Naive thymus-derived CD4-positive, alpha-beta T cell (primary cell): ENCODE measurements at regions of chr4 and their contacts with region 1.

Region 1: GRCh38 chr4:121227341-121227792 is 63.2 kb upstream of the TNIP3 start:
- DNase-seq: peak in 3 of 9 donors; percentile 26 to 40 (median 28)
- ATAC-seq: peak; percentile 76
- H3K4me3 ChIP-seq: peak overlapping the region; percentile 34
- H3K4me3 Mint-ChIP-seq: peak overlapping the region in 9 of 10 donors; percentile 52 to 83 (median 69)
- H3K27ac ChIP-seq: peak overlapping the region; percentile 62
- H3K27ac Mint-ChIP-seq: peak overlapping the region; percentile 9 to 91 (median 77)
- H3K4me1 ChIP-seq: peaks cover 7 to 11% of the 10 kb centered on the region in 2 donors
- H3K4me1 Mint-ChIP-seq: peaks cover 12 to 50% (median 30%) of the 10 kb centered on the region in 7 donors
- H3K27me3 ChIP-seq: no peaks in the 10 kb centered on the region
- H3K27me3 Mint-ChIP-seq: no peaks in the 10 kb centered on the region

Region 2: GRCh38 chr4:121199742-121200561 is 27.4 kb before region 1 on chr4:
- CTCF ChIA-PET with region 1: interaction called, 7 read pairs
- POLR2A ChIA-PET with region 1: interaction called, 5 read pairs
- intact Hi-C with region 1: loop called in 1 of 2 experiments (anchors 2 kb)
- DNase-seq: peak in 1 of 9 donors; percentile 23
- ATAC-seq: peak; percentile 87
- H3K4me3 ChIP-seq: peak overlapping the region; percentile 18
- H3K4me3 Mint-ChIP-seq: peak overlapping the region in 8 of 10 donors; percentile 1 to 59 (median 26)
- H3K27ac ChIP-seq: no peak overlapping the region
- H3K27ac Mint-ChIP-seq: peak overlapping the region in 7 of 9 donors; percentile 5 to 85 (median 23)
- H3K4me1 ChIP-seq: peaks cover 7 to 26% of the 10 kb centered on the region in 2 donors
- H3K4me1 Mint-ChIP-seq: peaks cover 12 to 31% (median 26%) of the 10 kb centered on the region in 7 donors
- H3K27me3 ChIP-seq: no peaks in the 10 kb centered on the region
- H3K27me3 Mint-ChIP-seq: peaks cover 0 to 6% (median 0%) of the 10 kb centered on the region in 5 donors

Region 3: DNA sequence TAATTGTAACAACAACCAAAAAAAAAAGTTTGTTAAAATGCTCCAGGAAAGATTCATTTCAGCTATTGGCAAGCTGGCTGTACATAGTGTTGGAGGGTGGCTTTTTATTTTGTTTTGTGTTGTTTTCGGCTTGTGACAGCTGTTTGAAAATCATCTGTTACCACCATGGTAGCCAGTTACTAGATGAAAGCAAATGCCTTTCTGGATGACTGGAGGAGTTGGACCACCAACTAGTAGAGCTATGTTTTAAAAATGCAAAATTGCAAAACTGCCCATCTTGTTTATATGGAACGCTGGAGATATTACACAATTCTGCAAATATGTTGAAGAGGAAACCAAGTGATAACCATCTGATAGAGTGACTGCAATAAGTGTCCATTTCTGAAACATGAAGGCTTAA is 10.0 kb before region 1 on chr4:
- CTCF ChIA-PET with region 1: interaction called, 5 read pairs
- POLR2A ChIA-PET with region 1: interaction called, 3 read pairs
- intact Hi-C with region 1: loop called in 1 of 2 experiments (anchors 1 kb)
- DNase-seq: no peak
- ATAC-seq: no peak
- H3K4me3 ChIP-seq: no peak overlapping the region
- H3K4me3 Mint-ChIP-seq: no peak overlapping the region
- H3K27ac ChIP-seq: no peak overlapping the region
- H3K27ac Mint-ChIP-seq: peak overlapping the region in 2 of 9 donors; percentile 41 to 69
- H3K4me1 ChIP-seq: peaks cover 12 to 42% of the 10 kb centered on the region in 2 donors
- H3K4me1 Mint-ChIP-seq: peaks cover 23 to 54% (median 37%) of the 10 kb centered on the region in 7 donors
- H3K27me3 ChIP-seq: no peaks in the 10 kb centered on the region
- H3K27me3 Mint-ChIP-seq: peaks cover 0 to 6% (median 0%) of the 10 kb centered on the region in 5 donors

Region 4: GRCh38 chr4:121243485-121243884 is 16.1 kb after region 1 on chr4:
- CTCF ChIA-PET with region 1: interaction called, 4 read pairs
- POLR2A ChIA-PET with region 1: interaction called, 3 read pairs
- intact Hi-C with region 1: loop called in 1 of 2 experiments (anchors 1 kb)
- DNase-seq: no peak
- ATAC-seq: peak; percentile 37
- H3K4me3 ChIP-seq: peak overlapping the region; percentile 50
- H3K4me3 Mint-ChIP-seq: peak overlapping the region; percentile 52 to 85 (median 78)
- H3K27ac ChIP-seq: peak overlapping the region; percentile 43
- H3K27ac Mint-ChIP-seq: peak overlapping the region in 8 of 9 donors; percentile 22 to 87 (median 52)
- H3K4me1 ChIP-seq: peaks cover 0 to 10% of the 10 kb centered on the region in 2 donors
- H3K4me1 Mint-ChIP-seq: peaks cover 0 to 25% (median 8%) of the 10 kb centered on the region in 7 donors
- H3K27me3 ChIP-seq: no peaks in the 10 kb centered on the region
- H3K27me3 Mint-ChIP-seq: no peaks in the 10 kb centered on the region